ENCODE measurements at regions of chr5 and their contacts with region 1.

Region 1: GRCh38 chr5:32403760-32404159 is 40.8 kb downstream of the ZFR start:
- DNase-seq: no peak
- ATAC-seq: no peak
- H3K4me3 ChIP-seq: no peak overlapping the region
- H3K4me3 Mint-ChIP-seq: no peak overlapping the region
- H3K27ac ChIP-seq: no peak overlapping the region
- H3K27ac Mint-ChIP-seq: no peak overlapping the region
- H3K4me1 ChIP-seq: no peaks in the 10 kb centered on the region
- H3K4me1 Mint-ChIP-seq: peaks cover 3% of the 10 kb centered on the region
- H3K27me3 ChIP-seq: no peaks in the 10 kb centered on the region
- H3K27me3 Mint-ChIP-seq: no peaks in the 10 kb centered on the region
- CTCF ChIP-seq: no peak

Region 2: GRCh38 chr5:32436553-32437242 is 32.9 kb after region 1 on chr5:
- CTCF ChIA-PET with region 1: no interaction called
- POLR2A ChIA-PET with region 1: no interaction called
- intact Hi-C with region 1: loop called in 1 of 2 experiments (anchors 5 kb)
- DNase-seq: no peak
- ATAC-seq: no peak
- H3K4me3 ChIP-seq: no peak overlapping the region
- H3K4me3 Mint-ChIP-seq: no peak overlapping the region
- H3K27ac ChIP-seq: no peak overlapping the region
- H3K27ac Mint-ChIP-seq: no peak overlapping the region
- H3K4me1 ChIP-seq: peaks cover 42% of the 10 kb centered on the region
- H3K4me1 Mint-ChIP-seq: peaks cover 66% of the 10 kb centered on the region
- H3K27me3 ChIP-seq: no peaks in the 10 kb centered on the region
- H3K27me3 Mint-ChIP-seq: no peaks in the 10 kb centered on the region
- CTCF ChIP-seq: no peak

Region 3: DNA sequence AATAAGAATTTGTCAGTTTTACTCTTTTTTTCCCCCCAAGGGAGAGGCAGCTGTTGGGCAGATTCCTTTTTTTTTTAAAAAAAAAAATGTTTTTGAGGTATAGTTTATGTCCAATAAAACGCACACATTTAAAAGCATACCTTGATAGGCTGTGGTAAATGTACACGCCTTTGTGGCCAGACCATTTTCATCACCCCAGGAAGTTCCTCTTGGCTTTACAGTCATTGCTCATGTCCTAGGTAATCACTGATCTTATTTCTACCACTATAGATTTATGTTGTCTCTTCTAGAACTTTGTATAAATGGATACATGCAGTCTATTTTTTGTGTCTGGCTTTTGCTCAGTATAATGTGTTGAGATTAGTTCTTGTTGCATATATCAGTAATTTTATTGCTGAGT is 191.4 kb after region 1 on chr5:
- CTCF ChIA-PET with region 1: interaction called, 3 read pairs
- POLR2A ChIA-PET with region 1: no interaction called
- intact Hi-C with region 1: loop called in 1 of 2 experiments (anchors 5 kb)
- DNase-seq: no peak
- ATAC-seq: no peak
- H3K4me3 ChIP-seq: no peak overlapping the region
- H3K4me3 Mint-ChIP-seq: no peak overlapping the region
- H3K27ac ChIP-seq: no peak overlapping the region
- H3K27ac Mint-ChIP-seq: no peak overlapping the region
- H3K4me1 ChIP-seq: peaks cover 56% of the 10 kb centered on the region
- H3K4me1 Mint-ChIP-seq: peaks cover 72% of the 10 kb centered on the region
- H3K27me3 ChIP-seq: no peaks in the 10 kb centered on the region
- H3K27me3 Mint-ChIP-seq: no peaks in the 10 kb centered on the region
- CTCF ChIP-seq: no peak

Measured in CD8-positive, alpha-beta T cell (primary cell).